ENCODE measurements at regions of chr11 and their contacts with region 1.

Region 1: GRCh38 chr11:72024069-72024754 is 25.5 kb downstream of the IL18BP start:
- DNase-seq: no peak
- ATAC-seq: no peak
- H3K4me3 ChIP-seq: no peak overlapping the region
- H3K27ac ChIP-seq: peak overlapping the region; percentile 65 to 80; a peak in 5 of 6 replicates
- H3K4me1 ChIP-seq: peaks cover 12% of the 10 kb centered on the region
- CTCF ChIP-seq: no peak
- EP300 ChIP-seq: no peak
- POLR2A ChIP-seq: no peak
- RAD21 ChIP-seq: no peak

Region 2: GRCh38 chr11:71934213-71934612 is 90.0 kb before region 1 on chr11:
- CTCF ChIA-PET with region 1: no interaction called
- POLR2A ChIA-PET with region 1: no interaction called
- DNase-seq: no peak
- ATAC-seq: peak; percentile 43 to 55; a peak in 4 of 6 replicates
- H3K4me3 ChIP-seq: no peak overlapping the region
- H3K27ac ChIP-seq: peak overlapping the region; percentile 39 to 83; a peak in 5 of 6 replicates
- H3K4me1 ChIP-seq: peaks cover 94% of the 10 kb centered on the region
- CTCF ChIP-seq: no peak
- EP300 ChIP-seq: no peak
- POLR2A ChIP-seq: no peak
- RAD21 ChIP-seq: no peak

Region 3: DNA sequence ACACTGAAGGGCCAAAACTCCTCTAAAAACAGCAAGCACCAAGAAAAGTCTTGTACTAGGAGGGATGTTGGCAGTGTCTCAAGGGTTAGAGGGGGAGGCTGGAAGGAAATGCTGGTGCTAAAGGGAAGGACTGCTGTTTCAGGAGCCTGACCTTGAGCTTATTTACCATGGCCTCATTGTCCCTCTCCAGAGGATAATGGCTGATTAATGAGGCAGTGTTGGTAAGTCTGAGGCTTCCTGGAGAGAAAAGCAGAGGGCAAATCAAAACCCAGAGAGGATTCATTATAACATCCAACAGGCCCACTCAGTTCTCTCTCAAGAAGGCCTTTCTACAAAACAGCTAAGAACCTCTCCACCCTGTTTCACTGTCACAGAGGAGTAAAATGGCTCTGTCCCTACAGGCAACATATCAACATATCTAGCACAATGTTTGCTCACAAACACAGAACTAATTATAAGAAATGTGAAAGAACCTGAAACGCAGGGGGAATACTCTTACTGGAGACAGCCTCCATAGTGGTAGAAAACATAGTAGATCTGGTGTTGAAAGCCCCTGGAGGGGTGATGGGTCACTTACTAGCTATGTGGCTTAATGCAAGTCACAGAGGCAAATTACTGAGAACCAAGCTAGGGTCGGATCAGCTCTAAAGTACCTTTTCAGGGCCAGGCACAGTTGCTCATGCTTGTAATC is 24.7 kb after region 1 on chr11:
- CTCF ChIA-PET with region 1: interaction called, 11 read pairs
- POLR2A ChIA-PET with region 1: no interaction called
- DNase-seq: no peak
- ATAC-seq: no peak
- H3K4me3 ChIP-seq: no peak overlapping the region
- H3K27ac ChIP-seq: no peak overlapping the region
- H3K4me1 ChIP-seq: no peaks in the 10 kb centered on the region
- CTCF ChIP-seq: no peak
- EP300 ChIP-seq: no peak
- POLR2A ChIP-seq: no peak
- RAD21 ChIP-seq: no peak

Region 4: DNA sequence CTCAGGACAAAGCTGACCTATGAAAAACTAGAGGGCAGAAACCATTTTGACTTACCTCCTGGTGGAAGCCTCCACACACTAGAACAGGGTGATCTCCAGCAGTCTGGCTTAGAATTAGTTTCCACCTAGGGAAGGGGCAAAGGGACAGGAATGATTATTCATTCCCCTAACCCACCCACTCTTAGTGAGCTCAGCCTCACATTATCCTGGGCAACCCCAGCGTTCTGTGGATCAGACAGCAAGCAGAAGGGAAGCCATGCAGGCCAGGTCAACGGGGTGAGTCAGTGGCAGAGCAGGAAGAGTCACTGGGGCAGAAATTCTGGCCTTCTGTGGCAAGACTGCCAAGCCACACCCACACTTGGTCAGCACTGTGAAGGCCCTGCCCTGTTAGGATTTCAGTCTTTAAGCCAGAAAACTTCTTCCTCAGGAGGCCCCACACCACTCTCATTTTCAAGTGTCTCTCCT is 45.6 kb after region 1 on chr11:
- CTCF ChIA-PET with region 1: interaction called, 21 read pairs
- POLR2A ChIA-PET with region 1: interaction called, 3 read pairs
- DNase-seq: peak; percentile 59 to 78
- ATAC-seq: peak; percentile 99
- H3K4me3 ChIP-seq: no peak overlapping the region
- H3K27ac ChIP-seq: peak overlapping the region; percentile 58 to 86
- H3K4me1 ChIP-seq: peaks cover 55% of the 10 kb centered on the region
- CTCF ChIP-seq: no peak
- EP300 ChIP-seq: no peak
- POLR2A ChIP-seq: peak; percentile 28; the same call in 1 of the 2 replicates
- RAD21 ChIP-seq: no peak

Region 5: GRCh38 chr11:72085621-72086351 is 61.6 kb after region 1 on chr11:
- CTCF ChIA-PET with region 1: interaction called, 354 read pairs
- POLR2A ChIA-PET with region 1: interaction called, 11 read pairs
- DNase-seq: no peak
- ATAC-seq: no peak
- H3K4me3 ChIP-seq: no peak overlapping the region
- H3K27ac ChIP-seq: no peak overlapping the region
- H3K4me1 ChIP-seq: peaks cover 9% of the 10 kb centered on the region; the same call in 2 of the 3 replicates
- CTCF ChIP-seq: no peak
- EP300 ChIP-seq: no peak
- POLR2A ChIP-seq: no peak
- RAD21 ChIP-seq: no peak